ENCODE measurements at regions of chr9 and their contacts with region 1.

Region 1: DNA sequence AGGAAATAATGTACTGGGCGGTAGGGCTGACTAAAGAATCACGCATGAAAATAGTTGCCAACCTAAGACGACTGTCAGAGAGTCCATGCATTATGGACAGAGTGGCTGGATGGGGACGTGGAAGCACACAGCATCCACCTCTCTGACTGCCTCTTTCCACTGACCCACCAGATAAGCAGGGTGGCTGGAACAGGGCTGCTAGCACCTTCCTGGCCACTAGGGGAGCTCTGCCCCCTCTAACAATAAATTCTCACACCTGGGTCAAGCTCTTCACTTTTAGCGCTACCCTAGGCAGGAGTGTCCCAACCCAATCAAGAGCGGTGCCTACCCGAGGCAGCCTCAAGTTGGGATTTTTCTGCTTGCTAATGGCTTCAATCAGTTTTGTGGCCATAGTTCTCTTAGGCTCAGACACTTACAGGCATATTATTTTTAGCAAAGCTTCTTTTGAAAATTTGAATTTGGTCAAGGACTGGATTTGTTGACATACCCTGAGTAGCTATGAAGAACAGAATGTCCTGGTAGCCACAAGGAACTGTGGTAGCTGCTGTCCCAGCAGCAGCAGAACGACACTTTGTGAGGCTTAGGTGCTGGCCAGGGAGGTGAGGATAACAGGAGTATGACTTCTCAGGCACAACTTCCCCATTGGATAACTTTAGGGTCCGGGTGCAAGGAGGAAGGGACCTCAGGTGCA is 6.9 kb upstream of the TPM2 start:
- DNase-seq: peak; percentile 66
- H3K4me3 Mint-ChIP-seq: no peak overlapping the region
- H3K27ac Mint-ChIP-seq: peak overlapping the region; percentile 50
- H3K4me1 Mint-ChIP-seq: peaks cover 4% of the 10 kb centered on the region
- H3K27me3 Mint-ChIP-seq: no peaks in the 10 kb centered on the region

Region 2: DNA sequence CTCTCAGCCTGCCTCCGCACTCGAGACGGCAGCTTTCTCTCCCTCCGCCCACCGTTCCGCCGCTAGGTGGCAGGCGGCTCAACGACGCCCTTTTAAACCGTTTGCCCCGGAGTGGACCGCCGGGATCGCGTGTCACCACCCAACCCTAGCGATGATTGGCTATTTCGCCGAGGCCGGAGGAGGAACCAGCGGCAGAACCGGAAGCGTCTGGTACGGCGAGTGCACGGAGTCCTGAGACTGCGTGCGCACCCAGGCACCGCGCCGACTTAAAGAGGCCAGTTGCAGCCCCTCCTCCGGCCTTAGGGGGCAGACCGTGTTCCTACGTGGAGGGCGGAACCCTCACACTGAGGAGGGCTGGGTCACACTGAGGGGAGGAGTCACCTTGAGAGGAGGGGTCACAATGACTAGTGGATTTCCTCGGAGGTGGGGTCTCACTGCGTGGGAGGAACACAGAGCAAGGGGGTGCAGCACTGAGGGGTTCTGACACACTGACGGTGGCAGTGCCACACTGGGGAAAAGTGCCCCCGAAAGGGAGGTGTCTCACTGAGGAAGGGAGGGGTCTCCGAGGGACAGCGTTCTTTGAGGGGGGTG is 92.6 kb before region 1 on chr9:
- CTCF ChIA-PET with region 1: interaction called, 11 read pairs
- DNase-seq: peak; percentile 100
- H3K4me3 Mint-ChIP-seq: peak overlapping the region; percentile 89
- H3K27ac Mint-ChIP-seq: peak overlapping the region; percentile 97
- H3K4me1 Mint-ChIP-seq: peaks cover 41% of the 10 kb centered on the region
- H3K27me3 Mint-ChIP-seq: no peaks in the 10 kb centered on the region

Region 3: DNA sequence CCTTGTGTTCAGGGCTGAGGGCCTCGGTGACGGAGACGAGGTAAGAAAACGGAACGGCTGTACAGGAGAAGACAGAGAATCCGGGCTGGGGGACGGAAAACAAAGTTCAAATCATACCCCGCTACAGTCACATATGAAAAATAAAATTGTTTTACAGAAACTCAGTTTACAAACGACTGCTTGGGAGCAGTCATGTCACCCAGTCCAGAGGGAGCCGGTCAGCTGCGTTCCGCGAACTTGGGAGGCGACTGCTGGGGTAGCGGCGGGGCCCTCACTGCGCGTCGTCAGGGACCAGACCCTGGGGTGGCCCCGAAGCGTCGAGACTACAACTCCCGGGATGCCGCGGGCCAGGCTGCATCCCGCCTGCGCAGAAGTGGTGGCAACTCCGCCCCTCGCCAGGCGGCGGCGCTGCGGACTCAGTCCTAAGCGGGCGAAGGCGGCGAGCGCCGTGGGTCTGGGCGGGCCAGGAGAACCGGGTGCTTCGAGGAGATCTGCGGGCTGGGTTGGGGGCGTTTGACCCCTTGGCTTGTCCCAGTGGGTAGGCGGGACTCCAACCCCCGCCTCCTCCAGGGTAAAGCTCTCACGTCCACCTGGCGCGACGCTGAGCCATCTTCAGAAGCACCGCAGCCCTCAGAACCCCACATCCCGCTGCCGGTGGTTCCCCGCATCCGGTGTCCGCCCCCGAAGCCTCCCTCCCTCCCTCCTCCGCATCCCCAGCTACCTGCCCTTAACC is 50.0 kb before region 1 on chr9:
- CTCF ChIA-PET with region 1: interaction called, 21 read pairs
- DNase-seq: peak; percentile 95
- H3K4me3 Mint-ChIP-seq: peak overlapping the region; percentile 97
- H3K27ac Mint-ChIP-seq: peak overlapping the region; percentile 92
- H3K4me1 Mint-ChIP-seq: peaks cover 61% of the 10 kb centered on the region
- H3K27me3 Mint-ChIP-seq: no peaks in the 10 kb centered on the region

Region 4: GRCh38 chr9:35675732-35676392 is 20.8 kb before region 1 on chr9:
- CTCF ChIA-PET with region 1: interaction called, 19 read pairs
- DNase-seq: peak; percentile 47
- H3K4me3 Mint-ChIP-seq: no peak overlapping the region
- H3K27ac Mint-ChIP-seq: no peak overlapping the region
- H3K4me1 Mint-ChIP-seq: peaks cover 14% of the 10 kb centered on the region
- H3K27me3 Mint-ChIP-seq: peaks cover 81% of the 10 kb centered on the region

Region 5: GRCh38 chr9:35732122-35732799 is 35.6 kb after region 1 on chr9 and contains the starts of genes CREB3 and TLN1:
- CTCF ChIA-PET with region 1: interaction called, 43 read pairs
- DNase-seq: peak; percentile 99
- H3K4me3 Mint-ChIP-seq: no peak within 1 kb of the TSS
- H3K27ac Mint-ChIP-seq: peak within 1 kb of the TSS; percentile 92
- H3K4me1 Mint-ChIP-seq: peaks cover 34% of the 10 kb centered on the region
- H3K27me3 Mint-ChIP-seq: no peaks in the 10 kb centered on the region